ENCODE measurements at regions of chr19 and their contacts with region 1.

Region 1: DNA sequence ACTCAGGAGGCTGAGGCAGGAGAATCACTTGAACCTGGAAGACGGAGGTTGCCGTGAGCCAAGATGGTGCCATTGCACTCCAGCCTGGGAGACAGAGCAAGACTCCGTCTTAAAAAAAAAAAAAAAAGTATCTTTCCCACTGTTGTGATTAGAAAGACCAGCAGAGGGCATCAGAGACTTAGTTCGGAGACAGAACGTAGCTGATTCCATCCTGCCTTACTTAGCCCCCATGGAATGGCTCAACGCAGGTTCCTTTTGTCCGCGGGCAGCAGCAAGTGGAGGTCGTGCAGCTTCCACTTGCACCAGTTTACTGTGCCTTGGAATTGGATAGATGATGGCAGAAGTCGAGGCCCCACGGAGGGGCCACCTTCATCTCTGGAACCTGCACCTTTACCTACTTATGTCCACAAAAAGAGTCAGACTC is 8.1 kb downstream of the TIMM29 start:
- DNase-seq: peak; percentile 83
- H3K4me3 ChIP-seq: peak overlapping the region in 1 of 2 experiments; percentile 40; a peak in 1 of 4 replicates
- H3K27ac ChIP-seq: peak overlapping the region in 1 of 2 experiments; percentile 51; a peak in 1 of 4 replicates
- H3K4me1 ChIP-seq: peaks cover 0 to 8% of the 10 kb centered on the region in 2 experiments; a peak in 2 of 4 replicates
- H3K27me3 ChIP-seq: no peaks in the 10 kb centered on the region
- CTCF ChIP-seq: peak; percentile 75
- EP300 ChIP-seq: no peak
- RAD21 ChIP-seq: peak; percentile 82

Region 2: DNA sequence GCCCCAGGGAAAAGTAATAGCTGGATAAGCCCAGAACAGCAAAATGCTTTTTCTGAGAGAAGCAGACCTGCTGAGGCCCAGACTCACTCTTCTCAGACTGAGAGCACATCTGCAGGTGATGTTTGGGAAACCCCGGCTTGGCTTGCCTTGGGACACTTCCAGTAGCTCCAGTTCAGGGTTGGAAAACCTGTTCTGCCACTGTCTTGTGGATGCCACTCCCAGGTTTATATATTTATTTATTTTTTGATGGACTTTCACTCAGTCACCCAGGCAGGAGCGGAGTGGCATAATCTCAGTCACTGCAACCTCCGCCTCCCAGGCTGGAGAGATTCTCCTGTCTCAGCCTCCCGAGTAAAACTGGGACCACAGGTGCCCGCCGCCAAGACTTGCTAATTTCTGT is 16.1 kb after region 1 on chr19:
- CTCF ChIA-PET with region 1: interaction called, 27 read pairs
- POLR2A ChIA-PET with region 1: no interaction called
- DNase-seq: no peak
- H3K4me3 ChIP-seq: no peak overlapping the region
- H3K27ac ChIP-seq: no peak overlapping the region
- H3K4me1 ChIP-seq: no peaks in the 10 kb centered on the region; a peak in 1 of 4 replicates
- H3K27me3 ChIP-seq: no peaks in the 10 kb centered on the region
- CTCF ChIP-seq: no peak
- EP300 ChIP-seq: no peak
- RAD21 ChIP-seq: no peak

Region 3: DNA sequence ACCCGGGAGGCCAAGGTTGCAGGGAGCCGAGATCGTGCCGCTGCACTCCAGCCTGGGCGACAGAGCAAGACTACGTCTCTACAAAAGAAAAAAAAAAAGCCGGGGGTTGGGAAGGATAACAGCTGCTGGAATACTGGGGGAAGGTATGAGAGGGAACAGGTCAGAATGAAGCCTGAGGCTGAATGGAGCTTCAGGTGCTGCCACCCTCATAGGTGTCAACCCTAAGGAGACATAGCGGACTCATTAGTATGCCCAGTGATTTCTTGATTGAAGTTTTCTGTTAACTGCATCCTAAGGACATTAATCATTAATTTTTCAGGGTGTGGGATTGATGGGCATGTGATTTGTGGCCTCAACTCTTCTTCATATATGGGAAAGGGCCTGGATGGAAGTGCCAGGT is 30.1 kb after region 1 on chr19:
- CTCF ChIA-PET with region 1: interaction called, 27 read pairs
- POLR2A ChIA-PET with region 1: interaction called, 4 read pairs
- DNase-seq: no peak
- H3K4me3 ChIP-seq: no peak overlapping the region
- H3K27ac ChIP-seq: no peak overlapping the region
- H3K4me1 ChIP-seq: peaks cover 0 to 9% of the 10 kb centered on the region in 2 experiments; a peak in 1 of 4 replicates
- H3K27me3 ChIP-seq: no peaks in the 10 kb centered on the region
- CTCF ChIP-seq: no peak
- EP300 ChIP-seq: no peak
- RAD21 ChIP-seq: no peak

Region 4: DNA sequence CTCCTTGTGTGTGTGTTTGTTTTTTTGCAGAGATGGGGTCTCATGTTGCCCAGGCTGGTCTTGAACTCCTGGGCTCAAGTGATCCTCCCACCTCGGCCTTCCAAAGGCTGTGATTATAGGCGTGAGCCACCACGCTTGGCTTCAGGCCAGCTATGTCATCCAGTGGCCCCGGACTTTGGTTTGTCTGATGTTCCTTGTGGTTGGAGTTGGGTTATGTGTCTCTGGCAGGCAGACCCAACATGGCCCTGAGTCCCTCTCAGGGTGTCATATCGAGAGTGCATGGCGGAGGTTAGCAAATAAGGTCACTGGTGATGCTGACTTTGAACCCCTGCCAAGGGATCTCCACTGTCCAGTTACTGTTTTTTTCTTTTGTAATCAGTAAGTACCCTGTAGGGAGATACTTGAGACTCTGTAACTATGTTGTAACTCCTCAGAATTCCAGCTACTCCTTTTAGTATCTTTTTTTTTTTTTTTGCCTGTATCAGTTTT is 61.4 kb after region 1 on chr19:
- CTCF ChIA-PET with region 1: interaction called, 13 read pairs
- POLR2A ChIA-PET with region 1: no interaction called
- DNase-seq: no peak
- H3K4me3 ChIP-seq: no peak overlapping the region
- H3K27ac ChIP-seq: no peak overlapping the region
- H3K4me1 ChIP-seq: no peaks in the 10 kb centered on the region
- H3K27me3 ChIP-seq: no peaks in the 10 kb centered on the region
- CTCF ChIP-seq: no peak
- EP300 ChIP-seq: no peak
- RAD21 ChIP-seq: no peak

Region 5: DNA sequence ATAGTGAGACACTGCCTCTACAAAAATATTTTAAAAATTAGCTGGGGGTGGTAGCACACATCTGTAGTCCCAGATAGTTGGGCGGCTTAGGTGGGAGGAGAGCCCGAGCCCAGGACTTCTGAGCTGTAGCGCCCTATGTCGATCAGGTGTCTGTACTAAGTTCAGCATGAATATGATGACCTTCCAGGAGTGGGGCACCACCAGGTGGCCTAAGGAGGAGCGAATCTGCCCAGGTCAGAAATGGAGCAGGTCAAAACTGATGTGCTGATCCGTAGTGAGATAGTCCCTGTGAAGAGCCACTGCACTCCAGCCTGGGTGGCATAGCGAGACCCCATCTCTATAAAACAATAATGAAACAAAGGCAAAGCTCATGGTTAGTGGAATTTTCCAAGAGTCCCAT is 75.0 kb after region 1 on chr19:
- CTCF ChIA-PET with region 1: interaction called, 11 read pairs
- POLR2A ChIA-PET with region 1: interaction called, 3 read pairs
- DNase-seq: no peak
- H3K4me3 ChIP-seq: no peak overlapping the region
- H3K27ac ChIP-seq: no peak overlapping the region
- H3K4me1 ChIP-seq: no peaks in the 10 kb centered on the region
- H3K27me3 ChIP-seq: no peaks in the 10 kb centered on the region
- CTCF ChIP-seq: no peak
- EP300 ChIP-seq: no peak
- RAD21 ChIP-seq: no peak